Astrocyte of the cerebellum (primary cell): ENCODE measurements at regions of chr6 and their contacts with region 1.

Region 1: GRCh38 chr6:165146456-165146855 is 162.9 kb downstream of the C6orf118 start:
- DNase-seq: no peak
- H3K4me3 ChIP-seq: no peak overlapping the region
- CTCF ChIP-seq: no peak

Region 2: GRCh38 chr6:165098165-165098564 is 48.3 kb before region 1 on chr6:
- in situ Hi-C with region 1: loop called (anchors 5 kb)
- DNase-seq: no peak
- H3K4me3 ChIP-seq: no peak overlapping the region
- CTCF ChIP-seq: no peak

Region 3: DNA sequence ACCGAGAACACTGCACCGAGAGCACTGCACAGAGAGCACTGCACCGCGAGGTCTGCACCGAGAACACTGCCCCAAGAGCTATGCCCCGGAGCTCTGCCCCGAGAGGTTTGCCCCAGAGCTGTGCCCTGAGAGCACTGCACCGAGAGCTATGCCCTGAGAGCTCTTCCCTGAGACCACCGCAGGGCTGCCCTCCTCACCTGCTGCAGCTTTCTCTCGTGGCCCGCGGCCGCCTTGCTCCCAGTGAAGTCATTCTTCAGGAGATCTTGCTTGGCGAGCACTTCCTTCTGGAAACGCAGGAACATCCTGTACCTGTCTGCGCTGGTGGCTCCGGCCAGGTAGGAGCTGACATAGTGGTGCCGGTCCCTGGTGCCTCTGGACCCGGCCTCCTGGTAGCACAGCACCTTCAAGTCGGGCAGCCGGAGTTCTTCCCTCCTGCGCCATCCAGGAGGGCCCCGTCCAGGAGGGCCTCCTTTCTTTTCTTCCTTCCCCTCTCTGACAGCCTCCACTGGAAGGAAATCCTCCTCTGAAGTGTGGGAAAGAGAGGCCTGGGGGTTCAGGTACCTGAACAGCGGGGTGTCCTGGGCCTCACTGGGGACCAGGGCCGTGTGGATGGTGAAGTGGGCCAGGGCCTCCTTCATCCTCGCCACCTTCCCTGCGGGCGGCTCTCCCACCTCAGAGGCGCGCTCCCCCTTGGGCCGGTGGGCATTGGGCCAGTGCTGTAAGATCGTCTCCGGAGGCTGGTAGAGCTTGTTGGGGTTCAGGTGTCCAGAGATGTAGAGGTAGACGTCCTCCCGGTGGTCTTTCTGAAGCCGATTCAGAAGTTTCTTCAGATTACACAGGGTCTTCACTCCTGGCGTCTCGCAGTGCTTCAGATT is 155.2 kb after region 1 on chr6:
- in situ Hi-C with region 1: no loop called
- DNase-seq: no peak
- H3K4me3 ChIP-seq: no peak overlapping the region
- CTCF ChIP-seq: no peak